Colonic mucosa (tissue), 4 donors: ENCODE measurements at regions of chr18 and their contacts with region 1.

Region 1: GRCh38 chr18:58529714-58530354 is 99.1 kb downstream of the ALPK2 start:
- DNase-seq: peak; percentile 76
- H3K4me3 ChIP-seq: no peak overlapping the region
- H3K27ac ChIP-seq: no peak overlapping the region
- H3K4me1 ChIP-seq: no peaks in the 10 kb centered on the region
- H3K27me3 ChIP-seq: no peaks in the 10 kb centered on the region
- CTCF ChIP-seq: peak; percentile 78

Region 2: DNA sequence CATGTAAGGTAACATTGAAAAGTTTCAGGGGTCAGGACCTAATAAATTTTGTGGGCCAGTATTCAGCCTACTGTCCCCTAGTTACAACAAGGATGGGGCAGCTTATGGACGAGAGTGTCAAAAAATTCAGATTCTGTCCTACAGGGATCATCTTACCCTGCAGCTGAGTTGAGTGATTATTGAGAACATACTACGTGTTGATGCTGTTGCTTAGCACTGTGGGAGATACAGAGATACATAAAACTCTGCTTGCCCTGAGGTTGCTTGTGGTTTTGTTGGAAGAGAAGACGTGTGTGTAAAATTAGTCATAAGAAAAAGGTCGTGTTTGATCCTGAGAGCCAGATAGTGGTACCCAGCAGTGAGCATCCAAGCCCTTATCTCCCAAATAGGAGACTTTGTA is 232.6 kb before region 1 on chr18:
- intact Hi-C with region 1: no loop called
- DNase-seq: no peak
- H3K4me3 ChIP-seq: no peak overlapping the region
- H3K27ac ChIP-seq: no peak overlapping the region
- H3K4me1 ChIP-seq: no peaks in the 10 kb centered on the region
- H3K27me3 ChIP-seq: no peaks in the 10 kb centered on the region
- CTCF ChIP-seq: no peak

Region 3: GRCh38 chr18:58761241-58761969 is 231.6 kb after region 1 on chr18:
- intact Hi-C with region 1: loop called (anchors 5 kb)
- DNase-seq: peak; percentile 9
- H3K4me3 ChIP-seq: no peak overlapping the region
- H3K27ac ChIP-seq: no peak overlapping the region
- H3K4me1 ChIP-seq: no peaks in the 10 kb centered on the region
- H3K27me3 ChIP-seq: no peaks in the 10 kb centered on the region
- CTCF ChIP-seq: no peak

Region 4: GRCh38 chr18:59070181-59070912 is 540.5 kb after region 1 on chr18:
- intact Hi-C with region 1: loop called (anchors 5 kb)
- DNase-seq: peak; percentile 87
- H3K4me3 ChIP-seq: no peak overlapping the region
- H3K27ac ChIP-seq: no peak overlapping the region
- H3K4me1 ChIP-seq: no peaks in the 10 kb centered on the region
- H3K27me3 ChIP-seq: no peaks in the 10 kb centered on the region
- CTCF ChIP-seq: peak; percentile 60